ENCODE measurements at regions of chr10 and their contacts with region 1.

Region 1: GRCh38 chr10:59240582-59241183 is 64.2 kb downstream of the PHYHIPL start:
- DNase-seq: peak; percentile 56
- H3K4me3 Mint-ChIP-seq: no peak overlapping the region
- H3K27ac Mint-ChIP-seq: no peak overlapping the region
- H3K4me1 Mint-ChIP-seq: no peaks in the 10 kb centered on the region
- H3K27me3 Mint-ChIP-seq: peaks cover 79% of the 10 kb centered on the region
- CTCF ChIP-seq: peak; percentile 58

Region 2: GRCh38 chr10:59155556-59155955 is 85.1 kb before region 1 on chr10:
- CTCF ChIA-PET with region 1: no interaction called
- POLR2A ChIA-PET with region 1: no interaction called
- intact Hi-C with region 1: no loop called
- DNase-seq: no peak
- H3K4me3 Mint-ChIP-seq: no peak overlapping the region
- H3K27ac Mint-ChIP-seq: no peak overlapping the region
- H3K4me1 Mint-ChIP-seq: no peaks in the 10 kb centered on the region
- H3K27me3 Mint-ChIP-seq: peaks cover 63% of the 10 kb centered on the region
- CTCF ChIP-seq: no peak

Region 3: DNA sequence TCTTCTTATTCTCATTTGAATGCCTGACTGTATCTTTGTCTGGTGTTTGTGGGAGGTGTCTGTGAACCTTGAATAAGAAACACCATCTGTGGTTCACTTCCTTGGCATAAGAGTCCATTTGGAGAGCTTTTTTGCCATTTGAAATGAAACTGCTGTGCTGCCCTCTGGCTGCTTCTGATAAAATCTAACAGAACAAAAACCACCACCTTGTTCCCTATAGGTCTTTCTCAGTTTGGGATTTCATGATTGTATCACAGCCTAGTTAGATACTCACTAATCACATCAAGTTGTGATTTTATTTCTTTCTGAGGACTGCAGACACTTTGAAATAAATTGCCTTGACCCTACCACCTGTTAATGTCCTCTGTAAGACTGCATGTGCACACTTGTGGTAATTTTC is 224.4 kb after region 1 on chr10:
- CTCF ChIA-PET with region 1: interaction called, 18 read pairs
- POLR2A ChIA-PET with region 1: no interaction called
- intact Hi-C with region 1: loop called (anchors 1 kb)
- DNase-seq: peak; percentile 36
- H3K4me3 Mint-ChIP-seq: no peak overlapping the region
- H3K27ac Mint-ChIP-seq: no peak overlapping the region
- H3K4me1 Mint-ChIP-seq: no peaks in the 10 kb centered on the region
- H3K27me3 Mint-ChIP-seq: peaks cover 28% of the 10 kb centered on the region
- CTCF ChIP-seq: no peak

Region 4: GRCh38 chr10:59580026-59580863 is 339.6 kb after region 1 on chr10:
- CTCF ChIA-PET with region 1: interaction called, 19 read pairs
- POLR2A ChIA-PET with region 1: interaction called, 4 read pairs
- intact Hi-C with region 1: loop called (anchors 1 kb)
- DNase-seq: peak; percentile 34
- H3K4me3 Mint-ChIP-seq: no peak overlapping the region
- H3K27ac Mint-ChIP-seq: no peak overlapping the region
- H3K4me1 Mint-ChIP-seq: no peaks in the 10 kb centered on the region
- H3K27me3 Mint-ChIP-seq: peaks cover 21% of the 10 kb centered on the region
- CTCF ChIP-seq: peak; percentile 22

Region 5: DNA sequence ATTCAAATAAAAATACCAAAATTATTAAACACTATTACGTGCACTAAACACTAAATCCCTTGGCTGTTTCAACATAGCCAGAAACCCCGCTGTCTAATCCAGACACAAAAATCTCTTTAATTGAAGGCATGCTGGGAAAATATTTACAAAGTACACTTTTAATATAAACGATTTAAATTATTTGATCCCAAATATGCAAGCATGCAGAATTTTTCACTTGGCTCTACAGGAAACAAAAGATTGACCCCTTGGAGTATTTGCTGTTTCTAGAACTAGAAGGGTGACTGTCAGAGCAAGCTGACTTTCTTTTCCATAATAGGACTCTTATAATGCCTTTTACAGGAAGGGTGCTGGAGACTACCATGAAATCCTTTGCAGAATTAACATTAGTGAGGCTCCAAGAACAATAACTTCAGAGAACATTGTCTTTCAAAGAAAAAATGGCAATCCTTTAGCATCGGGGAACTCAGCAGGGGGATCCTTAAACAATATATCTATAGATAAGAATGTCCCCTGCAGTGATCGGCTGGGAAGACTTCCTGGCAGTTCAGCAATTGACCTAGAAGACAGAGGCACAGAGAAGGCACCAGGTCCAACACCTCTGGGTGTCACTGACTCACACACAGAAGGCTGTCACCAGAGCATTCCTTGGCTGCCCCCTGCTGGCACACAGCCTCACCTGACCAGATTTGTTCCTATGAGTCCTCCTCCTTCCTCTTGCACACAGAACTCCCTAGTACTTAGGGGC is 568.4 kb after region 1 on chr10:
- CTCF ChIA-PET with region 1: interaction called, 3 read pairs
- POLR2A ChIA-PET with region 1: no interaction called
- intact Hi-C with region 1: loop called (anchors 10 kb)
- DNase-seq: peak; percentile 81
- H3K4me3 Mint-ChIP-seq: no peak overlapping the region
- H3K27ac Mint-ChIP-seq: no peak overlapping the region
- H3K4me1 Mint-ChIP-seq: no peaks in the 10 kb centered on the region
- H3K27me3 Mint-ChIP-seq: no peaks in the 10 kb centered on the region
- CTCF ChIP-seq: peak; percentile 63

Measured in MCF 10A (cell line).